ENCODE measurements at regions of chr3 and their contacts with region 1.

Region 1: DNA sequence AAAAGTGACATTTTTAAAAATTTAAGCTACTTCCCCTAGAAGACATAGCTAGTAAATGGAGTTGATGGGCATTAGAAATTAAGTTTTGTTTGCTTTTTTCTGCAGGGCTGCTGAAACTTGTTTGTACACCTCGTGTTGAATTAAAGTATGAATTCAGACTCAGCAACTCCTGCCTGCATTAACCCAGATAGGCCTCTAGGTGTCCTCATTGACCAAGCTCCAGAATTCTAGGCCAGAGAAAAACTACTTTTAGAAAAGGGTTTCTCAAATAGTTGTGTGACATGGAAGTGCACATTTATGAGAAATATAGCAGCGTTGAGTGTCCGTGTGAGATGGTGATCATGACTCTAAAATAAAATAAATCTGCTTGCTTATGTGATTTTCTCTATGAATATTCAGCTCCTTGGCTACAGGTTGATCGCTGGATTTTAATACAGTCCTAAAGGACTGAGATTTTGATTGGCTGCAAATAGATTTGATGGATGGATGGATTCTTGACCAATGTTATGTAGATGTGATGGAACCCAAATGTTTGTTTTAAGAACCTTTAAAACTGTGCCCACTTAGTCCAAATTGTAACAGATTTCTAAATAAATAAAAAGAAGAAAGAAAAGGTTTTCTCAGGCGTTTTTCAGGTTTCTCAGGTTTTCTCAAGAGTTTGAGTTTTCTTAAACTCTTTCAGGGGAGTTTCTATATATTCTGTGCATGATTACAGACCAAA is 39.4 kb upstream of the LMOD3 start:
- DNase-seq: peak; percentile 53
- ATAC-seq: peak; percentile 69
- H3K4me3 Mint-ChIP-seq: no peak overlapping the region
- H3K27ac Mint-ChIP-seq: peak overlapping the region; percentile 11
- H3K4me1 Mint-ChIP-seq: peaks cover 18% of the 10 kb centered on the region
- H3K27me3 Mint-ChIP-seq: no peaks in the 10 kb centered on the region

Region 2: GRCh38 chr3:68817243-68817642 is 344.5 kb before region 1 on chr3:
- CTCF ChIA-PET with region 1: no interaction called
- DNase-seq: no peak
- ATAC-seq: no peak
- H3K4me3 Mint-ChIP-seq: no peak overlapping the region
- H3K27ac Mint-ChIP-seq: no peak overlapping the region
- H3K4me1 Mint-ChIP-seq: no peaks in the 10 kb centered on the region
- H3K27me3 Mint-ChIP-seq: no peaks in the 10 kb centered on the region

Region 3: GRCh38 chr3:69174871-69175737 is 13.4 kb after region 1 on chr3:
- CTCF ChIA-PET with region 1: interaction called, 13 read pairs
- DNase-seq: no peak
- ATAC-seq: no peak
- H3K4me3 Mint-ChIP-seq: no peak overlapping the region
- H3K27ac Mint-ChIP-seq: peak overlapping the region; percentile 46
- H3K4me1 Mint-ChIP-seq: peaks cover 38% of the 10 kb centered on the region
- H3K27me3 Mint-ChIP-seq: no peaks in the 10 kb centered on the region

Region 4: DNA sequence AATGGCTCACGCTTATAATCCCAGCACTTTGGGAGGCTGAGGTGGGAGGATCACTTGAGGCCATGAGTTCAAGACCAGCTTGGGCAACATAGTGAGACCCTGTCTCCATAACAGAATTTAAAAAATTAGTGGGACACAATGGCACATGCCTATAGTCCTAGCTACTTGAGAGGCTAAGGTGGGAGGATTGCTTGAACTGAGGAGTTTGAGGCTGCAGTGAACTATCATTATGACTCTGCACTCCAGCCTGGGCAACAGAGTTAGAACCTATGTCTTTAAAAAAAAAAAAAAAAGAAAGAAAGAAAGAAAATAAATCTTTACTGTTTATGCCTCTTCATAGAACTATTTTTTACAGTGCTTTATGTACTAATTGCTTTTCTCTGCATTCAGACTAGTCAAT is 45.3 kb after region 1 on chr3:
- CTCF ChIA-PET with region 1: interaction called, 10 read pairs
- DNase-seq: peak; percentile 55
- ATAC-seq: no peak
- H3K4me3 Mint-ChIP-seq: no peak overlapping the region
- H3K27ac Mint-ChIP-seq: peak overlapping the region; percentile 94
- H3K4me1 Mint-ChIP-seq: peaks cover 83% of the 10 kb centered on the region
- H3K27me3 Mint-ChIP-seq: no peaks in the 10 kb centered on the region

Region 5: GRCh38 chr3:69320871-69321271 is 159.1 kb after region 1 on chr3:
- CTCF ChIA-PET with region 1: interaction called, 18 read pairs
- DNase-seq: no peak
- ATAC-seq: no peak
- H3K4me3 Mint-ChIP-seq: no peak overlapping the region
- H3K27ac Mint-ChIP-seq: no peak overlapping the region
- H3K4me1 Mint-ChIP-seq: peaks cover 2% of the 10 kb centered on the region
- H3K27me3 Mint-ChIP-seq: no peaks in the 10 kb centered on the region

Region 6: DNA sequence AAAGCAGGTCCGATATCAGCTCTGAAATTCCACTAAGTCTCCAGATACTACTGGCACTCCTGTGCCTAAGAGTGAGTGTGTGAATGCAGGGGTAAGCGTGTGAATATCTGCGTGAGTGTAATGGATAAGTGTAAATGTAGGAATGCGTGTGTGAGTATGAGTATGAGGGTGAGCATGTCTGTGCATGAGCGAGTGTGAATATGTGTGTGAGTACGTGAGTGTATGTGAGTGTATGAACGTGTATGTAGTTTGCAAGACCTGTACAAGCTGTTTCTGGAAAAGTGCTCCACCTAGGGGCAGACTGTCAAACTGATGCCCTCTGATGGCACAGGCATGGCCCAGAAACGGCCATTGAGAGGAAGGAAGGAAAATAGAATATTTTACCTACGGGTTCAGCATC is 248.5 kb after region 1 on chr3:
- CTCF ChIA-PET with region 1: interaction called, 21 read pairs
- DNase-seq: peak; percentile 80
- ATAC-seq: peak; percentile 94
- H3K4me3 Mint-ChIP-seq: no peak overlapping the region
- H3K27ac Mint-ChIP-seq: no peak overlapping the region
- H3K4me1 Mint-ChIP-seq: peaks cover 2% of the 10 kb centered on the region
- H3K27me3 Mint-ChIP-seq: peaks cover 5% of the 10 kb centered on the region

Region 7: DNA sequence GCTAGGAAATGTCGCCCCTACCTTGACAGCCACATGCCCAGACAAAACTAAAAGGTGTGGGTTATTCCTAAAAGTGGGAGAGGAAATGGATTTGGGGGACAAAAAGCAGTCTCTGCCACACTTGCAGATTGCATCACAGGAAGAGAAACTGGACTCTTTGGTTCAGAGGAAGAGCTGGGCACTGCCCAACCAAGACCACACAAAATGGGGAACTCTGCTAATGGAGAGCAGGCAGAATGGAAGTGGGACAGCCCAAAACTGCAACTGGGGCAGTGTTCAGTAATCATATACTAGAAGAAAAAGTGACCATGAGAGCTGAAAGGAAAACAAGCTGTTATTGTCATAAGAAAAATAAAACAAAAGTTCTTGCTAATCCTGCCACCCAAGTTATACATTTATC is 363.1 kb after region 1 on chr3:
- CTCF ChIA-PET with region 1: no interaction called
- DNase-seq: no peak
- ATAC-seq: no peak
- H3K4me3 Mint-ChIP-seq: no peak overlapping the region
- H3K27ac Mint-ChIP-seq: no peak overlapping the region
- H3K4me1 Mint-ChIP-seq: no peaks in the 10 kb centered on the region
- H3K27me3 Mint-ChIP-seq: peaks cover 4% of the 10 kb centered on the region